ENCODE measurements at regions of chr11 and their contacts with region 1.

Region 1: GRCh38 chr11:102614485-102614884 is 10.6 kb downstream of the MMP20 start:
- DNase-seq: peak in 1 of 9 donors; percentile 2
- ATAC-seq: no peak
- H3K4me3 ChIP-seq: no peak overlapping the region
- H3K4me3 Mint-ChIP-seq: no peak overlapping the region
- H3K27ac ChIP-seq: no peak overlapping the region
- H3K27ac Mint-ChIP-seq: no peak overlapping the region
- H3K4me1 ChIP-seq: no peaks in the 10 kb centered on the region
- H3K4me1 Mint-ChIP-seq: peaks cover 0 to 12% (median 0%) of the 10 kb centered on the region in 7 donors
- H3K27me3 ChIP-seq: no peaks in the 10 kb centered on the region
- H3K27me3 Mint-ChIP-seq: peaks cover 0 to 6% (median 0%) of the 10 kb centered on the region in 5 donors

Region 2: GRCh38 chr11:101860696-101861427 is 753.6 kb before region 1 on chr11:
- CTCF ChIA-PET with region 1: no interaction called
- POLR2A ChIA-PET with region 1: no interaction called
- intact Hi-C with region 1: loop called in 1 of 2 experiments (anchors 1 kb)
- DNase-seq: peak in 6 of 9 donors; percentile 1 to 36 (median 24)
- ATAC-seq: peak; percentile 76
- H3K4me3 ChIP-seq: no peak overlapping the region
- H3K4me3 Mint-ChIP-seq: no peak overlapping the region
- H3K27ac ChIP-seq: no peak overlapping the region
- H3K27ac Mint-ChIP-seq: no peak overlapping the region
- H3K4me1 ChIP-seq: no peaks in the 10 kb centered on the region
- H3K4me1 Mint-ChIP-seq: peaks cover 0 to 4% (median 0%) of the 10 kb centered on the region in 7 donors
- H3K27me3 ChIP-seq: no peaks in the 10 kb centered on the region
- H3K27me3 Mint-ChIP-seq: peaks cover 5 to 22% (median 12%) of the 10 kb centered on the region in 5 donors

Region 3: GRCh38 chr11:102367364-102367763 is 247.1 kb before region 1 on chr11:
- CTCF ChIA-PET with region 1: interaction called, 14 read pairs
- POLR2A ChIA-PET with region 1: no interaction called
- intact Hi-C with region 1: loop called (anchors 1 to 2 kb)
- DNase-seq: peak in 6 of 9 donors; percentile 33 to 65 (median 56)
- ATAC-seq: peak; percentile 77
- H3K4me3 ChIP-seq: no peak overlapping the region
- H3K4me3 Mint-ChIP-seq: peak overlapping the region in 3 of 10 donors; percentile 4 to 28 (median 19)
- H3K27ac ChIP-seq: no peak overlapping the region
- H3K27ac Mint-ChIP-seq: peak overlapping the region; percentile 16 to 93 (median 83)
- H3K4me1 ChIP-seq: peaks cover 0 to 12% of the 10 kb centered on the region in 2 donors
- H3K4me1 Mint-ChIP-seq: peaks cover 9 to 48% (median 33%) of the 10 kb centered on the region in 7 donors
- H3K27me3 ChIP-seq: no peaks in the 10 kb centered on the region
- H3K27me3 Mint-ChIP-seq: no peaks in the 10 kb centered on the region

Region 4: GRCh38 chr11:102495161-102496042 is 119.1 kb before region 1 on chr11:
- CTCF ChIA-PET with region 1: interaction called, 5 read pairs
- POLR2A ChIA-PET with region 1: no interaction called
- intact Hi-C with region 1: loop called (anchors 1 to 2 kb)
- DNase-seq: peak in 7 of 9 donors; percentile 54 to 79 (median 71)
- ATAC-seq: peak; percentile 91
- H3K4me3 ChIP-seq: no peak overlapping the region
- H3K4me3 Mint-ChIP-seq: peak overlapping the region in 1 of 10 donors; percentile 18
- H3K27ac ChIP-seq: no peak overlapping the region
- H3K27ac Mint-ChIP-seq: peak overlapping the region in 4 of 9 donors; percentile 2 to 40 (median 12)
- H3K4me1 ChIP-seq: no peaks in the 10 kb centered on the region
- H3K4me1 Mint-ChIP-seq: peaks cover 4 to 26% (median 10%) of the 10 kb centered on the region in 7 donors
- H3K27me3 ChIP-seq: no peaks in the 10 kb centered on the region
- H3K27me3 Mint-ChIP-seq: peaks cover 0 to 22% (median 0%) of the 10 kb centered on the region in 5 donors

Region 5: GRCh38 chr11:102560555-102561011 is 53.9 kb before region 1 on chr11:
- CTCF ChIA-PET with region 1: no interaction called
- POLR2A ChIA-PET with region 1: no interaction called
- intact Hi-C with region 1: loop called in 1 of 2 experiments (anchors 5 kb)
- DNase-seq: peak in 6 of 9 donors; percentile 2 to 34 (median 12)
- ATAC-seq: peak; percentile 54
- H3K4me3 ChIP-seq: peak overlapping the region; percentile 34
- H3K4me3 Mint-ChIP-seq: peak overlapping the region; percentile 42 to 81 (median 78)
- H3K27ac ChIP-seq: peak overlapping the region; percentile 63
- H3K27ac Mint-ChIP-seq: peak overlapping the region; percentile 70 to 96 (median 88)
- H3K4me1 ChIP-seq: peaks cover 21 to 28% of the 10 kb centered on the region in 2 donors
- H3K4me1 Mint-ChIP-seq: peaks cover 27 to 50% (median 45%) of the 10 kb centered on the region in 7 donors
- H3K27me3 ChIP-seq: no peaks in the 10 kb centered on the region
- H3K27me3 Mint-ChIP-seq: peaks cover 0 to 2% (median 0%) of the 10 kb centered on the region in 5 donors